Aorta (tissue), 5 donors: ENCODE measurements at regions of chr15 and their contacts with region 1.

Region 1: DNA sequence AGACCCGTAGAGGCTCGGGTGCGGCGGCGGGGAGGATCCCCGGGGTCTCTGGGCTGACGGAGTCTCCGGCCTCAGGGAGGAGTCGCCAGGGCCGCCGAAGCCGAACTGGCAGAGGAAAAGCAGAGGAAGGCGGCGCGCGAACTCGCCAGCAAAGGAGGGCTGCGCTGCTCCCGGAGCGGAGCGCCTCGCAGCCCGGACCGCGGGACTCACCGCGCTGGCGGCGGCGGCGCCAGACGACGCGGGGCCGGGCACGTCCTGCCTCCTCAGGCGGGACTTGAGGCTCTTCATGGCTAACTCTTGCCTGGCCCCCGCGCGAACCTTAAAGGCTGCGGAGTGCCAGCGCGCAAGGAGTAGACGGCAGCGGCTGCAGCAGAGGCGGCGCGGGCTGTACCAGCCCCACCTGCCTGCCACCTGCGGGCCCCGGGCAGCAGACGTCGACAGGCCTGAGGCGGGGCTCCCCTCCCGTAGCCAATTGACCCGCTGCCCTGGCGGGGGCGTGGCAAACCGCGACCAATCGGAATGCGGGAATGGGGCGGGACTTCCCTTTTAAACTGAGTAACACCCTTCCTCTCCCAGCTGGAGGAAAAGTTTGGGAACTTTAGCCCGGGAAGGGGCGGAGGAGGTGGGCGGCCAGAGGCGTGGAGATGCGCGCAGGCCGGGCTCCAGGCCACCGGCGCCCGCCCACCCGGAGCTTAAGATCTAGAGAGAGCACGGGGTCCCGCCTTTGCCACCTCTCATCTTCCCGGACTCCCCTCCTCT is at the start of gene UACA:
- DNase-seq: peak; percentile 97 to 98
- ATAC-seq: peak; percentile 98
- H3K4me3 ChIP-seq: peak within 1 kb of the TSS; percentile 72 to 90
- H3K27ac ChIP-seq: peak within 1 kb of the TSS; percentile 90 to 93
- H3K4me1 ChIP-seq: no peaks in the 10 kb centered on the region
- H3K27me3 ChIP-seq: no peaks in the 10 kb centered on the region
- total RNA-seq, gene UACA: 114 to 132 TPM

Region 2: GRCh38 chr15:70815644-70816043 is 52.3 kb after region 1 on chr15:
- intact Hi-C with region 1: loop called in 1 of 2 experiments (anchors 10 kb)
- DNase-seq: no peak
- ATAC-seq: no peak
- H3K4me3 ChIP-seq: no peak overlapping the region
- H3K27ac ChIP-seq: no peak overlapping the region
- H3K4me1 ChIP-seq: peaks cover 0 to 3% of the 10 kb centered on the region in 2 donors
- H3K27me3 ChIP-seq: no peaks in the 10 kb centered on the region